HAP-1 (cell line): ENCODE measurements at regions of chr3 and their contacts with region 1.

Region 1: GRCh38 chr3:146817704-146818103 is 212.6 kb upstream of the PLSCR5 start:
- DNase-seq: peak; percentile 15 to 68
- H3K4me3 ChIP-seq: no peak overlapping the region
- H3K4me1 ChIP-seq: no peaks in the 10 kb centered on the region
- H3K27me3 ChIP-seq: no peaks in the 10 kb centered on the region

Region 2: GRCh38 chr3:146513386-146514051 is 304.2 kb before region 1 on chr3:
- in situ Hi-C with region 1: no loop called
- DNase-seq: no peak
- H3K4me3 ChIP-seq: no peak overlapping the region
- H3K4me1 ChIP-seq: no peaks in the 10 kb centered on the region
- H3K27me3 ChIP-seq: no peaks in the 10 kb centered on the region

Region 3: DNA sequence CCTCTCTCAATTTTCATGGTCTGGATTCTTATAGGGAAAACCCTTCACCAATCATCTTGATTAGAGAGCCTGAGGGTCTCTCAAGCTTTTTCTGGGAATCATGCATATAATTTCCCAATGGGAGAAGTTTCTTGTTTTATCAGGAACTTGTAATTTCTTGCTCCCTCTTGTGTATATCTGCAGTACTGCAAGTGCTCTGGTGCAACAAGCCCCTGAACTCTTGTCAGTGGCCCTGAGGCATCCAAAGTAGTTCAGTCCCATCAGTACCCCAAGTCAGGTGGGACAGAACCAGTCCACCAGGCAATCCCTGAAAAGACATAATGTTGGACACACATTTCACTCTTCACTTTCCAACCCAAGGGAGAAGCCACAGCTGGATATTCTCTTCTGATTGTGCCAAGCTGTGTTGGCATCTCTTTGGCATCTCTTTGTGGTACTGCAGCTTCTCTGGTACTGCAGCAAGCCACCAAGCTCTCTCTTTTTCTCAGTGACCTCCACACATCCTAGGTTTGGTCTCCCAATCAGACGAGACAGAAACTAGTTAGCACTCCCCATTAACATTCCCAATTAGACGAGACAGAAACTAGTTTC is 374.2 kb after region 1 on chr3:
- in situ Hi-C with region 1: loop called (anchors 25 kb)
- DNase-seq: peak; percentile 48 to 65
- H3K4me3 ChIP-seq: no peak overlapping the region
- H3K4me1 ChIP-seq: no peaks in the 10 kb centered on the region
- H3K27me3 ChIP-seq: no peaks in the 10 kb centered on the region